GM10248 (cell line): ENCODE measurements at regions of chr16 and their contacts with region 1.

Region 1: GRCh38 chr16:66650707-66651473 is 45.7 kb downstream of the CMTM4 start:
- DNase-seq: peak; percentile 81
- CTCF ChIP-seq: peak; percentile 92

Region 2: DNA sequence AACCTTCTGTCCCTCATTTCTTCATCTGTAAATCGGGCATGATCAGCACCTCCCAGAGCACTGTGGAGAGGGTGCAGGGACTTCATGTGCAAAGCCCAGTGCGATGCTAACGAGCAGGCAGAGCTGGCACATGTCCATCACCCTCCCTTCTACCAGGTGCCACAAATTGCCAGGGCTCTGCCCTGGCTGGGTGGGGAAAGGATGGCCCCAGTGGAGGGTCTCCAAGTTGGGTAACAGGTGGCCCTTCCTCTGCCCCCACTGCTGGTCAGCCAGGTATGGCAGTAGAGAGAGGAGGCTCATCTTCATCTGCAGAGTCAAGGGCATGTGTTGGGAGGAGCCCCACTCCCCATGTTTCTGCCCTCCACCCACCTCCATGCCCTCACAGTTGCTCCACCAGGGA is 345.9 kb before region 1 on chr16:
- CTCF ChIA-PET with region 1: no interaction called
- POLR2A ChIA-PET with region 1: no interaction called
- DNase-seq: no peak
- CTCF ChIP-seq: no peak

Region 3: GRCh38 chr16:66552286-66553177 is 98.4 kb before region 1 on chr16 and contains the start of gene CKLF:
- CTCF ChIA-PET with region 1: interaction called, 11 read pairs
- POLR2A ChIA-PET with region 1: no interaction called
- DNase-seq: peak; percentile 96
- CTCF ChIP-seq: no peak

Region 4: DNA sequence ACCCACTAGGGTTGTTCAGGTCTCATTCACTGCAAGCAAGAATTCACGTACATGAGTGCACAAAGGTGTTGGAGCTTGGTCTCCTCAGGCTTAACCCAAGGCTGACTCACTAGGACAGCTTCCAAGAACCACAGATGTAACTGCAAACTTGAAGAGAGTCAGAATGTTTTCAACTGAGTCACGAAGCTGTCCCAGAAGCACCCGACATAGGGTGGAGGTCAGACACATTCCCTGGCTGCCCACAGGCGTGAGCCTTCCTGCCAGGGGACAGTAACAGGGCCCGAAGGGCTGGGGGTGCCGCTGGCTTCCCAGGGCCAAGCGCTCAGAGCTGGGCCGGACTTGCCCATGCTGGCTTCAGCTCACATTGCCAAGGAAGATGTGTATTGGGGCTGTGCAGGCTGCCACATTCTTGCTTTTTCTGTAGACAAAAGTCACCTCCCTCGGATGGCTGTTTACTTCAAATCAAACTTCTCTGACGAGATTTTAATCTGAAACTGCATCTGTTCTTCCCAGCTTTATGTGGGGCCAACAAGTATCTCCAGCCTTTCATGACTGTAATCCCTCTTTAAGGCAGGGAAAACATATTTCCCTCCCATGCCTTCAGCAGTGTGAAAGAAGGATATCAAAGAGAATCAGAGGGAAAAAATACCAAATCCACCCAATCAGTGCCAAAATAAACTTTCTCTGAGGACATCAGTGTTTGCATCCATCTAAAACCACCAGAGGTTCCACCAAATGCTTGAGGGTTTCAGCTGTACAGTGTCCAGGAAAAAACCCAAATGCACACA is 32.1 kb before region 1 on chr16:
- CTCF ChIA-PET with region 1: interaction called, 12 read pairs
- POLR2A ChIA-PET with region 1: no interaction called
- DNase-seq: no peak
- CTCF ChIP-seq: no peak

Region 5: GRCh38 chr16:66668777-66669444 is 18.0 kb after region 1 on chr16:
- CTCF ChIA-PET with region 1: interaction called, 67 read pairs
- POLR2A ChIA-PET with region 1: no interaction called
- DNase-seq: no peak
- CTCF ChIP-seq: no peak

Region 6: GRCh38 chr16:66682271-66682670 is 31.4 kb after region 1 on chr16:
- CTCF ChIA-PET with region 1: interaction called, 14 read pairs
- POLR2A ChIA-PET with region 1: no interaction called
- DNase-seq: no peak
- CTCF ChIP-seq: no peak

Region 7: GRCh38 chr16:66830422-66831404 is 179.8 kb after region 1 on chr16 and contains the start of gene NAE1:
- CTCF ChIA-PET with region 1: interaction called, 16 read pairs
- POLR2A ChIA-PET with region 1: no interaction called
- DNase-seq: peak; percentile 96
- CTCF ChIP-seq: peak; percentile 99